Right ventricle myocardium inferior (tissue), 1 donor: ENCODE measurements at regions of chr2 and their contacts with region 1.

Region 1: GRCh38 chr2:11477994-11478393 is 12.0 kb upstream of the E2F6 start:
- DNase-seq: peak; percentile 88
- ATAC-seq: peak; percentile 49

Region 2: GRCh38 chr2:11583840-11584524 is 106.0 kb after region 1 on chr2:
- intact Hi-C with region 1: loop called (anchors 1 kb)
- DNase-seq: no peak
- ATAC-seq: peak; percentile 72

Region 3: GRCh38 chr2:11688222-11689069 is 210.5 kb after region 1 on chr2:
- intact Hi-C with region 1: loop called (anchors 10 kb)
- DNase-seq: peak; percentile 88
- ATAC-seq: peak; percentile 85